ENCODE measurements at regions of chr3 and their contacts with region 1.

Region 1: GRCh38 chr3:186307594-186308221 is 54.3 kb downstream of the DGKG start:
- DNase-seq: peak; percentile 69
- H3K4me3 ChIP-seq: no peak overlapping the region
- H3K27ac ChIP-seq: no peak overlapping the region
- H3K4me1 ChIP-seq: no peaks in the 10 kb centered on the region
- H3K27me3 ChIP-seq: peaks cover 50% of the 10 kb centered on the region
- CTCF ChIP-seq: no peak

Region 2: DNA sequence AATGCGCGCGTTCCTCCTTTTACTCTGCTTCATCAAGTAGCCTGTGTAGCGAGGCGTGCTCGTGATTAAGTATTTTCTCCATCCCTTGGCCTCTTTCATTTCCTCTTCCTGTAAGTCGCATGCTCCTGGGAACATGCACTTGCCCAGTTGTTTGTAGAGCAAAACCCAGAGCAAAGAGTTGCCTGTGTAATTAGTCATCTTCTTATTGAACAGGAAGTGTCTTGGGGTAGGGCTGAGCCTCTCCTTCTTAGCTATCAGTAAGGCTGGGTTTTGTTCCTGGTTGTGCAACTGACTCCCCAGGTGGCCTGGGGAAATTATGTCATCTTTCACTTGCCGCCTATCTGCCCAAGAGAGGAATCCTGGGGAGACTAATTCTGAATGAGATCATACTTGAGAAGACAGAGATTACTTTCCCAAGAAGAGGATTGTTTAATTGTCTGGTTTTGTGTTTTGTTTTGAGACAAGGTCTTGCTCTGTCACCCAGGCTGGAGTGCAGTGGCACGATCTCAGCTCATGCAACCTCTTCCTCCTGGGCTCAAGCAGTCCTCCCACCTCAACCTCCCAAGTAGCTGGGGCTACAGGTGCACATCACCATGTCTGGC is 770.2 kb before region 1 on chr3:
- CTCF ChIA-PET with region 1: no interaction called
- POLR2A ChIA-PET with region 1: interaction called, 17 read pairs
- intact Hi-C with region 1: no loop called
- DNase-seq: peak; percentile 99
- H3K4me3 ChIP-seq: peak overlapping the region; percentile 17
- H3K27ac ChIP-seq: peak overlapping the region; percentile 89
- H3K4me1 ChIP-seq: peaks cover 14% of the 10 kb centered on the region
- H3K27me3 ChIP-seq: no peaks in the 10 kb centered on the region
- CTCF ChIP-seq: no peak

Region 3: GRCh38 chr3:186268616-186269448 is 38.9 kb before region 1 on chr3:
- CTCF ChIA-PET with region 1: no interaction called
- POLR2A ChIA-PET with region 1: no interaction called
- intact Hi-C with region 1: no loop called
- DNase-seq: peak; percentile 41
- H3K4me3 ChIP-seq: no peak overlapping the region
- H3K27ac ChIP-seq: no peak overlapping the region
- H3K4me1 ChIP-seq: no peaks in the 10 kb centered on the region
- H3K27me3 ChIP-seq: no peaks in the 10 kb centered on the region
- CTCF ChIP-seq: peak; percentile 54